HEK293 (cell line): ENCODE measurements at regions of chr6 and their contacts with region 1.

Region 1: GRCh38 chr6:142207265-142207877 is 60.3 kb downstream of the VTA1 start:
- H3K4me3 ChIP-seq: no peak overlapping the region
- H3K27ac ChIP-seq: no peak overlapping the region
- H3K4me1 ChIP-seq: no peaks in the 10 kb centered on the region
- CTCF ChIP-seq: peak; percentile 59

Region 2: GRCh38 chr6:141988954-141989705 is 218.2 kb before region 1 on chr6:
- CTCF ChIA-PET with region 1: interaction called, 10 read pairs
- POLR2A ChIA-PET with region 1: no interaction called
- H3K4me3 ChIP-seq: no peak overlapping the region
- H3K27ac ChIP-seq: no peak overlapping the region
- H3K4me1 ChIP-seq: no peaks in the 10 kb centered on the region
- CTCF ChIP-seq: no peak

Region 3: GRCh38 chr6:142146828-142147662 is 60.3 kb before region 1 on chr6 and contains the starts of genes NMBR and VTA1:
- CTCF ChIA-PET with region 1: interaction called, 31 read pairs
- POLR2A ChIA-PET with region 1: no interaction called
- H3K4me3 ChIP-seq: peak within 1 kb of the TSS; percentile 82
- H3K27ac ChIP-seq: no peak within 1 kb of the TSS; the same call in 1 of the 2 replicates
- H3K4me1 ChIP-seq: 0 out of 2 replicates have a peak, but pooled peaks cover 3% of the 10 kb centered on the region
- CTCF ChIP-seq: peak; percentile 97

Region 4: GRCh38 chr6:142195862-142196541 is 11.4 kb before region 1 on chr6:
- CTCF ChIA-PET with region 1: interaction called, 23 read pairs
- POLR2A ChIA-PET with region 1: no interaction called
- H3K4me3 ChIP-seq: no peak overlapping the region
- H3K27ac ChIP-seq: no peak overlapping the region
- H3K4me1 ChIP-seq: no peaks in the 10 kb centered on the region
- CTCF ChIP-seq: no peak

Region 5: DNA sequence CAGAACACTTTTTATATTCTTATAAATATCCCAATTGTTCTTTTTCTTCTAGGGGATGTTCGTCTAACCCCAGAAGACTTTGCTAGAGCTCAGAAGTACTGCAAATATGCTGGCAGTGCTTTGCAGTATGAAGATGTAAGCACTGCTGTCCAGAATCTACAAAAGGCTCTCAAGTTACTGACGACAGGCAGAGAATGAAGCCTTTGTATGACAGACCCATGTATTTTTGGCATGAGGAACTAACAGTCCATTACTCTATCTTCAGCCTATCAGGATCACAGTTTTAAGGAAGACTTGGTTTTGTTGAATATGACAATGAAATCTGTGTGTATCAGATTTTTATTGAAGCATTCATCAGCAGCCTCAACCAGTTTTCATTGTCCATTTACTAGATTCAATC is 11.1 kb after region 1 on chr6:
- CTCF ChIA-PET with region 1: interaction called, 36 read pairs
- POLR2A ChIA-PET with region 1: no interaction called
- H3K4me3 ChIP-seq: no peak overlapping the region
- H3K27ac ChIP-seq: no peak overlapping the region
- H3K4me1 ChIP-seq: no peaks in the 10 kb centered on the region
- CTCF ChIP-seq: no peak

Region 6: DNA sequence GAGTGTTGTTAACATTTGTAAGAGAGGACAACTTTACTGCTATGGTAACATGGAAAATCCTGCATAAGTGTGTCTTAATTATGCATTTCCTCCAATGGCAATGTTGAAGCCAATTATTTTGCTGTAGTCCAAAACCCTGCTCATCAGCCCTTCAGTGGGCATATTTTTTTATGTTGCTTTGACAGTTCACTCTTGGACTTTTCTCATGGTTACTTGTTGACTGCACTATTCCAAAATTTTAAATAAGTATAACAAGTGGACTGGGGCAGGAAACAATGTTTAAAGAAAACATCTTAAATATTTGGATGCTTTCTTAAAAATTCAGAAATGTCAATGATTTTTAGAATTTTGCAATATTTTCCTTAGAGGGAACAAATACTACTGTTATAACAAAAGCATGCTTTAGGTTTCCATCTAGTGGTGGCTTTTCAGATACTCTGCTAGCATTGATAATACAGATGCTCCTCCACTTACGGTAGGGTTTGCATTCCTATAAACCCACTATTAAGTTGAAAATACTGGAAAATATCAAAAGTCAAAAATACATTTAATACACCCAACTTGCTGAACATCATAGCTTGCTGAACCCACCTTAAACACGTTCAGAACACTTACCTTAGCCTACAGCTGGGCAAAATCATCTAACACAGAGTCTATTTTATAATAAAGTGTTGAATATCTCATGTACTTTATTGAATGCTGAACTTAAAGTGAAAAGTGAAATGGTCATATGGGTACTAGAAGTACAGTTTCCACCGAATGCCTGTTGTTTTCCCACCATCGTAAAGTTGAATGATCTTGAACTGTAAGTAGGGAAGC is 180.8 kb after region 1 on chr6:
- CTCF ChIA-PET with region 1: interaction called, 15 read pairs
- POLR2A ChIA-PET with region 1: no interaction called
- H3K4me3 ChIP-seq: no peak overlapping the region
- H3K27ac ChIP-seq: no peak overlapping the region
- H3K4me1 ChIP-seq: peaks cover 6% of the 10 kb centered on the region; the same call in 1 of the 2 replicates
- CTCF ChIP-seq: no peak; the same call in 1 of the 2 replicates